ENCODE measurements at regions of chr21 and their contacts with region 1.

Region 1: DNA sequence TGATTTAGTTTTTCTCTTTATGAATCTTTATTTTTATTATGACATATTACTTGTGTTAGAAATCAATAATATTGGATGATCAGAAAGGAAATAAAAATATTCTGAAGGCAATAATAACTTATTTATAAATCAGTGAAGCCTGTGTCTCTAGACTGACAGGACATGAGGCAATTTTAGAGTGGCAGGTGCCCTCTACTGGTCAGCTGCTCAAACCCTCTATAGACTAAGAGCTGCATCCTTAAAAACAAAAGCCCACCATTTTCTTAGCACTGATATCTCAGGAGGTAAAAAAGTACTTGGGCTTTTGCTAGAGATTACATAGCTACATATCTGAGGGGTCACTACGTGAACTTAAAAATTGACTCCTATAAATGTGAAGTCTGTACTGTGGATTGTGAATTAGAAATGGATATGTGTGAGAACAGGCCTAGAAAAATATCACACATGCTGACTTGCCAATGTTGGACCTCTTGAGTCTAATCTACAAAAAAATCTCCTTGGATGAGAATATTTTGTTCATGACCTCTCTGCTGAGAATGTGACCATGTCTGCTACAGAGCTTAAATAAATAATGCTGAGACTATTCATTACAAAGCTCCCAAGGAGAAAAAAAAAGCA is 597.9 kb upstream of the ADAMTS5 start:
- DNase-seq: peak in 1 of 2 donors; percentile 26
- ATAC-seq: peak; percentile 62 to 86 (median 76)
- H3K4me3 ChIP-seq: no peak overlapping the region
- H3K27ac ChIP-seq: no peak overlapping the region
- H3K4me1 ChIP-seq: peaks cover 9% of the 10 kb centered on the region
- H3K27me3 ChIP-seq: no peaks in the 10 kb centered on the region
- CTCF ChIP-seq: peak; percentile 70

Region 2: GRCh38 chr21:26850108-26850643 is 714.6 kb before region 1 on chr21:
- intact Hi-C with region 1: loop called (anchors 5 to 10 kb)
- DNase-seq: no peak
- ATAC-seq: no peak
- H3K4me3 ChIP-seq: peak overlapping the region; percentile 35
- H3K27ac ChIP-seq: no peak overlapping the region
- H3K4me1 ChIP-seq: peaks cover 6% of the 10 kb centered on the region
- H3K27me3 ChIP-seq: no peaks in the 10 kb centered on the region
- CTCF ChIP-seq: peak; percentile 64

Region 3: GRCh38 chr21:26967062-26967913 is 597.5 kb before region 1 on chr21 and contains the start of gene ADAMTS5:
- intact Hi-C with region 1: loop called in 1 of 2 experiments (anchors 10 kb)
- DNase-seq: peak; percentile 68 to 80
- ATAC-seq: peak; percentile 23 to 63 (median 46)
- H3K4me3 ChIP-seq: peak within 1 kb of the TSS; percentile 74
- H3K27ac ChIP-seq: peak within 1 kb of the TSS; percentile 68
- H3K4me1 ChIP-seq: no peaks in the 10 kb centered on the region
- H3K27me3 ChIP-seq: peaks cover 0 to 53% (median 5%) of the 10 kb centered on the region in 3 donors
- CTCF ChIP-seq: no peak
- total RNA-seq, gene ADAMTS5: 2.5 to 4.3 (median 2.9) TPM

Region 4: GRCh38 chr21:27519361-27519760 is 45.4 kb before region 1 on chr21:
- intact Hi-C with region 1: no loop called
- DNase-seq: no peak
- ATAC-seq: no peak
- H3K4me3 ChIP-seq: no peak overlapping the region
- H3K27ac ChIP-seq: no peak overlapping the region
- H3K4me1 ChIP-seq: no peaks in the 10 kb centered on the region
- H3K27me3 ChIP-seq: no peaks in the 10 kb centered on the region
- CTCF ChIP-seq: no peak

Region 5: GRCh38 chr21:27636656-27637055 is 71.9 kb after region 1 on chr21:
- intact Hi-C with region 1: loop called in 1 of 2 experiments (anchors 5 kb)
- DNase-seq: peak; percentile 15 to 49
- ATAC-seq: peak; percentile 98 to 99 (median 99)
- H3K4me3 ChIP-seq: peak overlapping the region; percentile 28
- H3K27ac ChIP-seq: peak overlapping the region; percentile 92
- H3K4me1 ChIP-seq: peaks cover 19% of the 10 kb centered on the region
- H3K27me3 ChIP-seq: no peaks in the 10 kb centered on the region
- CTCF ChIP-seq: no peak

Region 6: DNA sequence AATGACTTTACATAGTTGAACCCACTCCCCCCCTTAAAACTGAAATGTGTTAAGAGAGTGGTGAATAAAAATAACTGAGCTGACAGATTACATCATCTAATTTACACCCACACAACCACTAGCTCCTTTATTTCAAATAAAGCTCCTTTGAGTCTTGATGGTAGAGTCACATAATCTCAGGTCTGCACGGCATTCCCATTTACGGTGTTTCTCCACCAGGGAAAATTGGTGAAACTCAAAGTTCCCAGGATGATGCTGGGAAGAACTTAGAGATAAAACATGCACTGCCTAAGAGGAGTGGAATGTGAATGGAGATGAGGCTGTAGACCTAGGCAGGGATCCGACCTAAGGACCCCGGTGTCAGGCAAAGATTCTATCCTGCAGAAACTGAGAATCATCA is 129.9 kb after region 1 on chr21:
- intact Hi-C with region 1: loop called in 1 of 2 experiments (anchors 5 kb)
- DNase-seq: no peak
- ATAC-seq: no peak
- H3K4me3 ChIP-seq: no peak overlapping the region
- H3K27ac ChIP-seq: no peak overlapping the region
- H3K4me1 ChIP-seq: no peaks in the 10 kb centered on the region
- H3K27me3 ChIP-seq: no peaks in the 10 kb centered on the region
- CTCF ChIP-seq: no peak